Vagina (tissue), 2 donors: ENCODE measurements at regions of chr10 and their contacts with region 1.

Region 1: DNA sequence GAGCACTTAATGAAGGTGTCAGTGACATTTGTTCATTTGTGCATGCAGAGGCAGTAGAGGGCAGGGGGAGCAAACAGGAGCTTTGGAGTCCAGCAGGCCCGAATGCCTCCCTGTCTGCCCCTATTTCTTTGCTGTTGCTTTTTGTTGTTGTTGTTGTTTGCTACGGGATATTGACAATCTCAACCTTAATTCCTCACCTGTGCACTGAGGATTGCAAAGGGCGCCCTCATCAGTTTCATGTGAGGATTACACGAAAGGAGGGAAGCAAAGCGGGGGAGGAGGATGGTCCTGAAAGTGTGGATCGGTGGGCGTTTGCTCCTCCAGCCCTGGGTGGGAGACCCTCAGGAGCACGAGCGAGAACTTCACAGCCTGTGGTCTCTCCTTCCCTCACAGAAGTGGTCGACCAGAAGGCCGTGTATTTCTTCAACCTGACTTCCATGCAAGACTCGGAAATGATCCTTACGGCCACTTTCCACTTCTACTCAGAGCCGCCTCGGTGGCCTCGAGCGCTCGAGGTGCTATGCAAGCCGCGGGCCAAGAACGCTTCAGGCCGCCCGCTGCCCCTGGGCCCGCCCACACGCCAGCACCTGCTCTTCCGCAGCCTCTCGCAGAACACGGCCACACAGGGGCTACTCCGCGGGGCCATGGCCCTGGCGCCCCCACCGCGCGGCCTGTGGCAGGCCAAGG is 9.5 kb downstream of the GDF10 start:
- DNase-seq: no peak
- H3K4me3 ChIP-seq: no peak overlapping the region
- H3K27ac ChIP-seq: no peak overlapping the region
- H3K4me1 ChIP-seq: peaks cover 14% of the 10 kb centered on the region
- H3K27me3 ChIP-seq: no peaks in the 10 kb centered on the region
- CTCF ChIP-seq: no peak
- POLR2A ChIP-seq: no peak

Region 2: GRCh38 chr10:47047671-47048525 is 261.6 kb before region 1 on chr10:
- intact Hi-C with region 1: loop called (anchors 10 kb)
- DNase-seq: no peak
- H3K4me3 ChIP-seq: no peak overlapping the region
- H3K27ac ChIP-seq: no peak overlapping the region
- H3K4me1 ChIP-seq: peaks cover 9% of the 10 kb centered on the region
- H3K27me3 ChIP-seq: no peaks in the 10 kb centered on the region
- CTCF ChIP-seq: peak; percentile 58 to 71 (median 61)
- POLR2A ChIP-seq: no peak